Heart right ventricle (tissue), 16 donors: ENCODE measurements at regions of chr7 and their contacts with region 1.

Region 1: DNA sequence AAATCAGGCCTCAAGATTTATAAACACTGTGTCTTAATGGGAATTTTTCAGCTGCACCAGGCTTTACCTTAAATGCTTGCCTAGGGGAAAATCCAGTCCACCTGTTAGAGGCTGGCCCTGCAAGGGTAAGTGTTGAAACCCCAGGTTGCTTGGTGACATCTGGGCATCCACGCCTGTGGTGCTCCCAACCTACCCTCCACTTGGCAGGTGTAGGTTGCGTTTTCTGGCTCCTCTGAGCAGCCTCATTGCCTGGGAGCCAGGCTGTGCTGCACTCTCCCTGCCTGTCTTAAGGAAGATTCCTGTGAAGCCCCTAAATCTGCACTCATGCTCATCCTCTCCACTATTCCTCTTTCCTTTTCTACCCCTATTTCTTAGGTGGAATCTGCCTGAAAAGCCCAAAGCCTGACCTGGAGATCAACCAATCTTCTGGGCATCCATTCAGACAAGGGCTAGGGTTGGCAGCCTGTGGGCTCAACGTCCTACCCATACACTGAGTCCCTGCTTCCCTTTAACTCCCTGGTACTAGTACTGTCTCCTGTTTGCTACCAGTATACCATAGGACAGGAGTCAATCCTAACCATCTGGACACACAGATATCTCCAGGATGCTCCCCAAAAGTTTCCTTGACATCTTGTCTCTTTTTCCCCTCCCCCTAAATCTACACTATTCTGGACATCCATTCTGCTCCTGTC is 150.4 kb downstream of the PDE1C start:
- DNase-seq: no peak
- ATAC-seq: peak in 6 of 8 donors; percentile 18 to 61 (median 48)
- H3K4me3 ChIP-seq: no peak overlapping the region
- H3K27ac ChIP-seq: peak overlapping the region in 7 of 10 donors; percentile 11 to 75 (median 61)
- H3K4me1 ChIP-seq: peaks cover 0 to 91% (median 64%) of the 10 kb centered on the region in 9 donors
- H3K27me3 ChIP-seq: no peaks in the 10 kb centered on the region
- CTCF ChIP-seq: no peak

Region 2: DNA sequence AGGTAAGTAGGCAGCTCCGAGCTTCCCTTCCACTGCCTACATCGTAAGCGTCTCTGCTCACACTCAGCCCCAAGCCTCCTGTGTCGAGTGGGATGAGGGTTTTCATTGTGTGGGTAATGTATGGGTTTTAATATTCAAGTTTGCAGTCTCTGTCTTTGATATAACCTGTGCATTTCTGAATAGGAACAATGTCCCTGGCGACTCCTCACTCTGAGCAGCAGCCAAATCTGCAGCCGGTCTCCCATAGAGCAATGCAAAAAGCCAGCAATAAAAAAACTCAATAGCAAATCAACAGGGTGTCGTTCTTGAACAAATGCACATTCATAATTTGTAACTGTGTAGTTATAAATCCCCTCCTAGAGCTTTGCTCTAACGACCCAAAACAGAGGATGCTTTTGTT is 199.5 kb before region 1 on chr7:
- intact Hi-C with region 1: no loop called
- DNase-seq: no peak
- ATAC-seq: no peak
- H3K4me3 ChIP-seq: no peak overlapping the region
- H3K27ac ChIP-seq: no peak overlapping the region
- H3K4me1 ChIP-seq: no peaks in the 10 kb centered on the region
- H3K27me3 ChIP-seq: no peaks in the 10 kb centered on the region
- CTCF ChIP-seq: no peak

Region 3: GRCh38 chr7:32043714-32044113 is 123.9 kb after region 1 on chr7:
- intact Hi-C with region 1: loop called in 1 of 10 experiments (anchors 10 kb)
- DNase-seq: no peak
- ATAC-seq: peak in 4 of 8 donors; percentile 41 to 71 (median 66)
- H3K4me3 ChIP-seq: no peak overlapping the region
- H3K27ac ChIP-seq: peak overlapping the region in 4 of 10 donors; percentile 6 to 51 (median 16)
- H3K4me1 ChIP-seq: peaks cover 0 to 90% (median 36%) of the 10 kb centered on the region in 9 donors
- H3K27me3 ChIP-seq: no peaks in the 10 kb centered on the region
- CTCF ChIP-seq: no peak